Heart left ventricle (tissue), 16 donors: ENCODE measurements at regions of chr5 and their contacts with region 1.

Region 1: DNA sequence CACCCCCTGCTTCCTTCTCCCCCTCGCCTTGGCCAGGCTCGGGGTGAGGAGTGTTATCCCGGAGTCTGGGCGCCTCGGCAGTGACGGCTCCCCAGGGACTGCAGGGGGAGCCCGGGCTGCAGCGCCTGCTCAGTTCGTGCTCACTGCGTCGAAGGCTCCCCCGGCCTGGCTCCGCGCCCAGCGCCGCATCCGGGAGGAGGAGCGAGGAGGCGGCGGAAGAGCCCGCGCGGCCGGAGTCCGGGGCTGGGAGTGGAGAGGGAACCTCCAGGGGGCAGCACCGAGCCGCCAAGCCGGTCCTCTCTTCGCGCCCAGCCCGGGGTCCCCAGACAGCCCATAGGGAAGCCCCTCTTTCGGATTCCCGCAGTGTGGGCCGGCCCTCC is 1.3 kb upstream of the EGR1 start:
- DNase-seq: peak; percentile 96 to 98 (median 97)
- ATAC-seq: peak; percentile 77 to 84 (median 80)
- H3K4me3 ChIP-seq: peak overlapping the region; percentile 62 to 95 (median 86)
- H3K27ac ChIP-seq: peak overlapping the region; percentile 93 to 100 (median 98)
- H3K4me1 ChIP-seq: peaks cover 0 to 68% (median 37%) of the 10 kb centered on the region in 12 donors
- H3K27me3 ChIP-seq: no peaks in the 10 kb centered on the region
- CTCF ChIP-seq: peak; percentile 85 to 99 (median 94)
- POLR2A ChIP-seq: peak in 1 of 2 donors; percentile 73

Region 2: DNA sequence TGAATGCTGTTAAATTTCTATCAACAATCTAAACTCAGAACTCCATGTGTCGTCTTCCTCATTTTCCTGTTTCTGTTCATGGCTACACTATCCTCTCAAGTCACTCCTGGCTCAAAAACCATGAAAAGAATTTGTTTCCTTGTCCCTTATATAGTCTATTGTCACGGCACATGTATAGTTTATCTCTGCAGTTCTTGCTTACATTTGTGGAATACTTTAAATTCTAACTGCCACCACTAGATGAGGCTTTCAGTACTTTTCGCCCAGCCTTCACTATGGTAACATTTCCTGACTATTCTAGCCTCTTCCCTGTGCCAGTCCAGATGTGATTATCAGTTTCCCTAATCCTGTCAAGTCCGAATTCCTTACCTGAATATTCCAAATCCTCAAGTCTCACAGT is 540.1 kb before region 1 on chr5:
- intact Hi-C with region 1: no loop called
- DNase-seq: no peak
- ATAC-seq: no peak
- H3K4me3 ChIP-seq: no peak overlapping the region
- H3K27ac ChIP-seq: no peak overlapping the region
- H3K4me1 ChIP-seq: peaks cover 0 to 5% (median 0%) of the 10 kb centered on the region in 12 donors
- H3K27me3 ChIP-seq: no peaks in the 10 kb centered on the region
- CTCF ChIP-seq: no peak
- POLR2A ChIP-seq: no peak

Region 3: DNA sequence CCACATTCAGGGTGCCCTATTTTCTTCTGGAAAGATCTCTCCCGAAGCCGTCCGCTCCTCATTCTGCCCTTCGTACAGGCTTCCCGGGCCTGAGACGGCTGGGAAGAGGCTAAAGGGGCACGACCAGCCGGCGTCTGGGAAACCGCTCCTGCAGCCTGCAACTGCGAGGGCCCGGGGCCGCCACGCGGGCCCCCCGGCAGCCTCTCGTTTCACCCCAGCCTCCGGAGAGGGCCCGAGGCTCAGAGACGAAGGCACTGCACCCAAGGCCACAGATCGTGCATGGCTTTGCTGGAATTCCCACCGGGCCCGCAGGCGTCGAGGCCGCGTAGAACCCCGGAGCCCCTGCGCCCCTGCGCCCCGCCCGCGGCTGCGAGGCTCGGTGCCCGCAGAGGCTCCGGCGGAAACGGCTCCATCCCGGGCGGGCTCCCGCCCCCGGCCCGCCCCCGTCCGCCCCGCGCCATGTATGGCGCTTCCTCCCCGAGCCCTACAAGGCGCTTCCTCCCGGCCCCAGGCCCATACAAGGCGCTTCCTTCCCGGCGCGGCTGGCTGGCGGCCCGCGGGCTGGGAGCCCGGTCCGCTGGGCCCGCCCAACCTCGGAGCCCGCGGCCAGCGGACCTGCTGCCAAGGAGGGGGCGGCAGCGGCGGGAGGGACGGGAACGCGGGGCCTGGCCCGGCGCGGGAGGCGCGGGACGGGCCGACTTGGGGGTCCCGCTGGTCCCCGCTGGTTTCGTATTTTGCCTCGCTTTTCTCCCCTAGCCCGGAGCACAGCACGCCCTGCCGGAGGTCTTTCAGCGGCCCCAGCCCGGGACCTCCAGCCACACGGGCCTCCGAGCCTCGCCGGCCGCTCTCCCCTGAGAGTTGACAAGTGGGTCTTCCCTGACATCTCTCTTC is 27.9 kb after region 1 on chr5:
- intact Hi-C with region 1: loop called in 6 of 10 experiments (anchors 1 to 2 kb)
- DNase-seq: peak; percentile 93 to 96 (median 94)
- ATAC-seq: peak; percentile 97 to 99 (median 98)
- H3K4me3 ChIP-seq: peak overlapping the region; percentile 24 to 73 (median 60)
- H3K27ac ChIP-seq: peak overlapping the region in 10 of 12 donors; percentile 19 to 75 (median 59)
- H3K4me1 ChIP-seq: peaks cover 0 to 36% (median 19%) of the 10 kb centered on the region in 12 donors
- H3K27me3 ChIP-seq: peaks cover 0 to 18% (median 0%) of the 10 kb centered on the region in 9 donors
- CTCF ChIP-seq: no peak
- POLR2A ChIP-seq: no peak

Region 4: GRCh38 chr5:138503487-138504270 is 39.7 kb after region 1 on chr5:
- intact Hi-C with region 1: loop called in 3 of 10 experiments (anchors 1 to 5 kb)
- DNase-seq: peak in 2 of 5 donors; percentile 18 to 40
- ATAC-seq: peak; percentile 72 to 79 (median 76)
- H3K4me3 ChIP-seq: no peak overlapping the region
- H3K27ac ChIP-seq: peak overlapping the region in 4 of 12 donors; percentile 4 to 49 (median 28)
- H3K4me1 ChIP-seq: peaks cover 0 to 28% (median 8%) of the 10 kb centered on the region in 12 donors
- H3K27me3 ChIP-seq: no peaks in the 10 kb centered on the region
- CTCF ChIP-seq: peak; percentile 61 to 79 (median 72)
- POLR2A ChIP-seq: no peak